PC-9 (cell line): ENCODE measurements at regions of chr12 and their contacts with region 1.

Region 1: DNA sequence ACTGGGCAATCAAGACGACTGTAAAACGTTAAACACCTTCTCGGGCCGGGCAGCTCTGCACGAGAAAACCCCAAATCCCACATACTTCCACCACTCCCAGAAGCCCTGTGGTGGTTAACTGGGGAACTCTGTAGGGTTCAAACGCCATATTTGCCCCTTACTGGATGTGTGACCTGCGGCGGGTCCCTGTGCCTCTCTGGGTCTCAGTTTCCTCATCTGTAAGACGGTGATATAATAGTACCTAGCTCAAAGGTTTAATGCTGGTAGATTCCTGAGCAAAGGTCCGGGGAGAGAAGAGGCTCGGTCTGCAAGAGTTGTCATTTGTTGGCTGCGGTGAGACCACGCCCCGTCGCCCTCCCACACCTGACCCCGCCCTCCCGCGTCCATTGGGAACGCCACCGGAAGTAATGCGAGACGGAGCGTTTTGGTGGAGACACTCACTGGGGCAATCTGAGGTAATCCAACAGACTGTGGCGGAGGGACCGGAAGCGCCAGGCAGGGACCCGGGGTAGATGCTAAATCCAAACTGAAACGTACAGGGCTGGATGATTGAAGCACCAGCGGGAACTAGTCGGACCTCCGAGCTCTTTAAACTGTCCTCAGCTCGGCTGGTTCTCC is 661 bp upstream of the OGFOD2 start:
- DNase-seq: peak; percentile 90 to 98
- H3K4me3 ChIP-seq: peak overlapping the region; percentile 94
- H3K27ac ChIP-seq: peak overlapping the region; percentile 77
- H3K4me1 ChIP-seq: peaks cover 9% of the 10 kb centered on the region; the same call in 1 of the 2 replicates
- H3K27me3 ChIP-seq: no peaks in the 10 kb centered on the region
- CTCF ChIP-seq: no peak

Region 2: GRCh38 chr12:122895705-122896636 is 78.4 kb before region 1 on chr12 and contains the start of gene VPS37B:
- CTCF ChIA-PET with region 1: no interaction called
- POLR2A ChIA-PET with region 1: interaction called, 10 read pairs
- intact Hi-C with region 1: no loop called
- DNase-seq: peak; percentile 63 to 82
- H3K4me3 ChIP-seq: peak within 1 kb of the TSS; percentile 61
- H3K27ac ChIP-seq: peak within 1 kb of the TSS; percentile 97
- H3K4me1 ChIP-seq: peaks cover 73% of the 10 kb centered on the region
- H3K27me3 ChIP-seq: no peaks in the 10 kb centered on the region
- CTCF ChIP-seq: no peak
- total RNA-seq, gene VPS37B: 51.4 and 53.5 TPM in 2 replicates

Region 3: GRCh38 chr12:123013185-123014095 is 39.1 kb after region 1 on chr12:
- CTCF ChIA-PET with region 1: no interaction called
- POLR2A ChIA-PET with region 1: no interaction called
- intact Hi-C with region 1: no loop called
- DNase-seq: no peak
- H3K4me3 ChIP-seq: no peak overlapping the region
- H3K27ac ChIP-seq: no peak overlapping the region
- H3K4me1 ChIP-seq: peaks cover 2% of the 10 kb centered on the region; the same call in 1 of the 2 replicates
- H3K27me3 ChIP-seq: no peaks in the 10 kb centered on the region
- CTCF ChIP-seq: no peak

Region 4: GRCh38 chr12:123270214-123271000 is 296.0 kb after region 1 on chr12:
- CTCF ChIA-PET with region 1: no interaction called
- POLR2A ChIA-PET with region 1: interaction called, 12 read pairs
- intact Hi-C with region 1: no loop called
- DNase-seq: peak in 1 of 2 experiments; percentile 11
- H3K4me3 ChIP-seq: peak overlapping the region; percentile 68
- H3K27ac ChIP-seq: no peak overlapping the region
- H3K4me1 ChIP-seq: no peaks in the 10 kb centered on the region
- H3K27me3 ChIP-seq: no peaks in the 10 kb centered on the region
- CTCF ChIP-seq: 0 out of 2 replicates have a peak, but pooled peaks have one; percentile 10

Region 5: GRCh38 chr12:123601602-123602489 is 627.5 kb after region 1 on chr12 and contains the start of gene DDX55:
- CTCF ChIA-PET with region 1: no interaction called
- POLR2A ChIA-PET with region 1: no interaction called
- intact Hi-C with region 1: loop called (anchors 10 kb)
- DNase-seq: peak; percentile 63 to 79
- H3K4me3 ChIP-seq: peak within 1 kb of the TSS; percentile 97
- H3K27ac ChIP-seq: peak within 1 kb of the TSS; percentile 45
- H3K4me1 ChIP-seq: 0 out of 2 replicates have a peak, but pooled peaks cover 5% of the 10 kb centered on the region
- H3K27me3 ChIP-seq: no peaks in the 10 kb centered on the region
- CTCF ChIP-seq: peak; percentile 61
- total RNA-seq, gene DDX55: 17.5 and 19.5 TPM in 2 replicates